WTC11 (cell line): ENCODE measurements at regions of chrX and their contacts with region 1.

Region 1: DNA sequence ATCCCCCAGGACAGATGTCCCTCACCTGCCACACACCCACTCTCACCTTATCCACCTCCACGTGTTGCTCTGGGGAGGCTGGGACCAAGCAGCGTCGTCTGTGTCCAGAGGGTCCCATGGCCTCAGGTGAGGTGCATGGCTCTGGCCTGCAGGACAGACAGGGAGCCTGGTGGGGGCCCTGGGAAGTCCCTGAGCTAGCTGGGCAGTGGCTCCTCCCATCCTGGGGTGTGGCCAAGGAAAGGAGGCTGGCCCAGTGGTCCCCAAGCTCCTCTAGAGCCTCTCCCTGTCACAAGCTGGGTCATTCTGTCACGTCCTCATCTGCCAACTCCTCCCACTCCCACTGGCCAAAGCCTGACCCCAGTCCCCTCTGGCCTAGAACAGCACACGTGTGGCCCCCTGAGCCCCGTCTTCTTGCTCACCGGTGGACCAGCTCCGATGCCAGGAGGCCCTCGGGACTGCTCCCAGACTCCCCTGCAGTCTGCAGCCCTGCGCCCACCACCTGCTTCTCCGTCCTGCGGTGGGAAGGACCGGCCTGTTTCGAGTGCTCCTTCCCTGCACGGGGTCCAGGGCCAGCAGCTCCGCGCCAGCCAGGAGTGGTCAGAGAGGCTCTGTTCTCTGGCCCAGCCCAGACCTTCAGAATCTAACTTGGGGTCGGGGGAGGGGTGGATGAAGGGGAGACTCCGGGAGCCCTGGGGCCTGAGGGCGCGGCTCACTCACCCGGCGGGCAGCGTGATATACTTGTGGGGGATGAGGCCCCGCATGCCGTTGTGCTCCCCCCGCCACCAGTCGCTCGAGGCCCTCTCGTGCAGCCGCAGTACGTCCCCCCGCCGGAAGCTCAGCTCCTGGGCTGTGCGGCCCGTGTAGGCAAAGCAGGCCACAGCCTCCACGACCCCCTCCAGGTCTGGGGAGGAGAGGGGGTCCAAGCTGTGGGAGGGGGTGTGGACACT is 4.8 kb downstream of the AVPR2 start:
- DNase-seq: peak; percentile 47
- ATAC-seq: peak; percentile 76
- H3K4me3 Mint-ChIP-seq: no peak overlapping the region
- H3K27ac Mint-ChIP-seq: no peak overlapping the region
- H3K4me1 Mint-ChIP-seq: no peaks in the 10 kb centered on the region; the same call in 1 of the 2 replicates
- H3K27me3 Mint-ChIP-seq: no peaks in the 10 kb centered on the region; the same call in 1 of the 2 replicates
- CTCF ChIP-seq: no peak

Region 2: GRCh38 chrX:153927922-153928760 is 18.8 kb after region 1 on chrX:
- CTCF ChIA-PET with region 1: interaction called, 15 read pairs
- POLR2A ChIA-PET with region 1: interaction called, 3 read pairs
- DNase-seq: peak; percentile 91
- ATAC-seq: peak; percentile 89
- H3K4me3 Mint-ChIP-seq: peak overlapping the region; percentile 79
- H3K27ac Mint-ChIP-seq: peak overlapping the region; percentile 98
- H3K4me1 Mint-ChIP-seq: peaks cover 25% of the 10 kb centered on the region
- H3K27me3 Mint-ChIP-seq: no peaks in the 10 kb centered on the region
- CTCF ChIP-seq: no peak